ENCODE measurements at regions of chr3 and their contacts with region 1.

Region 1: GRCh38 chr3:184568924-184569829 is 7.6 kb downstream of the EPHB3 start:
- DNase-seq: peak; percentile 82 to 90
- ATAC-seq: peak; percentile 78 to 93 (median 86)
- H3K4me3 ChIP-seq: peak overlapping the region; percentile 28 to 66 (median 58)
- H3K27ac ChIP-seq: peak overlapping the region in 9 of 10 donors; percentile 34 to 83 (median 71)
- H3K4me1 ChIP-seq: peaks cover 4 to 47% (median 16%) of the 10 kb centered on the region in 9 donors
- H3K27me3 ChIP-seq: peaks cover 0 to 29% (median 13%) of the 10 kb centered on the region in 7 donors
- CTCF ChIP-seq: no peak

Region 2: DNA sequence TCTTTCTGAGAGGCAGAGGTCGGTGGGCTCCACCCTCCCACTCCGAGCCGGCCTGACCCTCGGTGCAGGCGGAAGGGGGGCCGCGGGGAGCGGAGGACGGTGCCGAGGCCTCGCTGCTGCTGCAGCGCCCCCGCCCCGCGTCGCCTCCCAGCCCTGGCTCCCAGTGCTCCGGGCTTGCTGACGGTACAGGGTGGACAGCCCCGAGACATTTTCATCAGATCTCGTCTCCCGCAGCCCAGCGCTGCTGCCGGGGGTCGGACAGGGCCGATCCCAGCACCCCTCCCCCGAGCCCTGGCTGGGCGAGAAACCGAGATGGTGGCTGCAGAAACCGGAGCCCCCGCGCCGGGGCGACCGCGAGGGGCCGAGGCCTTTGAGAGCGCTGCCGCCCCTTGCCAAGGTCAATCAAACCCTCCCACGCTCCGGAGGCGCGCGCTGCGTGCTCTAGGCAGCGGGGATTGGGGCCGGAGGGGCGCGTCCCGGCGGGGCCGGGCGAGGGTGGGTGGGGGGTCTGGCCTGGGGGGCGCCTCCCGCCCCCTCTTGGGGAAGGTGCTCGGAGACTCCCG is 34.9 kb after region 1 on chr3:
- intact Hi-C with region 1: loop called in 1 of 10 experiments (anchors 5 kb)
- DNase-seq: no peak
- ATAC-seq: peak; percentile 26 to 74 (median 58)
- H3K4me3 ChIP-seq: peak overlapping the region; percentile 21 to 64 (median 50)
- H3K27ac ChIP-seq: peak overlapping the region in 6 of 10 donors; percentile 5 to 66 (median 50)
- H3K4me1 ChIP-seq: peaks cover 10 to 40% (median 25%) of the 10 kb centered on the region in 9 donors
- H3K27me3 ChIP-seq: peaks cover 0 to 45% (median 18%) of the 10 kb centered on the region in 7 donors
- CTCF ChIP-seq: peak in 2 of 9 donors; percentile 18 to 20

Region 3: GRCh38 chr3:184711493-184712247 is 142.5 kb after region 1 on chr3 and contains the start of gene MAGEF1:
- intact Hi-C with region 1: loop called in 1 of 10 experiments (anchors 5 kb)
- DNase-seq: peak; percentile 85 to 86
- ATAC-seq: peak; percentile 92 to 98 (median 94)
- H3K4me3 ChIP-seq: peak within 1 kb of the TSS; percentile 66 to 97 (median 86)
- H3K27ac ChIP-seq: peak within 1 kb of the TSS; percentile 85 to 98 (median 94)
- H3K4me1 ChIP-seq: peaks cover 5 to 59% (median 31%) of the 10 kb centered on the region in 9 donors
- H3K27me3 ChIP-seq: no peaks in the 10 kb centered on the region
- CTCF ChIP-seq: no peak
- total RNA-seq, gene MAGEF1: 26.7 to 33.9 (median 30.5) TPM

Region 4: GRCh38 chr3:184727357-184728009 is 158.3 kb after region 1 on chr3:
- intact Hi-C with region 1: loop called in 1 of 10 experiments (anchors 2 kb)
- DNase-seq: peak in 1 of 2 donors; percentile 67
- ATAC-seq: peak; percentile 69 to 93 (median 88)
- H3K4me3 ChIP-seq: no peak overlapping the region
- H3K27ac ChIP-seq: no peak overlapping the region
- H3K4me1 ChIP-seq: peaks cover 0 to 13% (median 0%) of the 10 kb centered on the region in 9 donors
- H3K27me3 ChIP-seq: no peaks in the 10 kb centered on the region
- CTCF ChIP-seq: peak; percentile 47 to 83 (median 77)